ENCODE measurements at regions of chr1 and their contacts with region 1.

Region 1: DNA sequence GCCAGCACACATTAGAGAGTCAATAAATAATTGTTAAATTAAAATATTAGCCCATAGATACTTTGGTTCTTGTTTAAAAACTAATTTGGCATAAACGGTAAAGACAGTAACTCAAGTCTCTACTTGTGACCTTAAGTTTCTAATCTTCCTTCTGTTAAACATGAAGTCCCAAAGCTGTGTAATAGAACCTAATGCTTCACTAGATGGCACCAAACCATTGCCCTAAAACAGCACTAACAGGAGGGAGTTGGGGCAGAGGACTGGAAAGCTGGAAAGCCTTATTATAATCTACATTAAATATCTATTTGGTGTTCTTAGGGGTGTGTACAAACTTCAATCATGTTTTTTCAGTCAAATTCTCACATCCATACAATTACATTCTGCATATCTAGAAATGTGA is 176.7 kb downstream of the OLFM3 start:
- DNase-seq: no peak
- H3K4me3 Mint-ChIP-seq: no peak overlapping the region
- H3K27ac Mint-ChIP-seq: no peak overlapping the region
- H3K4me1 Mint-ChIP-seq: no peaks in the 10 kb centered on the region
- H3K27me3 Mint-ChIP-seq: no peaks in the 10 kb centered on the region
- CTCF ChIP-seq: no peak

Region 2: DNA sequence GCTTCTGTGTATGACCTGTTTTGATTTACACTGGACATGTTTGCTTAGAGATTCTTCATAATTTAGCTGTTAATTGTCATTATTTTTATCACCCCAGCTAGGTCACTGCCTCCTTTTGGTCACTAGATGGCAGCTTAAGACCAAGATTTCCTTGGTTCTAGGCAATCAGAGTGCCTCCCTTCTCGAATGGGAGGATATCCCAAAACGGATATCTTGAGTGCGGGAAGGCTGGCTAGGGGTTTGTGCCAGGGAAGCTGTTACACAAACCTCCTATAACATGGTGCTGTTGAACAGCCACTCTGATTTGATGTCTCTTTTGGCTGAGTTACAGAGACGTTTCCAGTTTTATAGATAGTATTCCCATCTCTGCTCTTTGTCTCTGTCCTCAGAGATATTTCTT is 299.8 kb before region 1 on chr1:
- CTCF ChIA-PET with region 1: no interaction called
- intact Hi-C with region 1: loop called (anchors 10 kb)
- DNase-seq: peak; percentile 2
- H3K4me3 Mint-ChIP-seq: no peak overlapping the region
- H3K27ac Mint-ChIP-seq: no peak overlapping the region
- H3K4me1 Mint-ChIP-seq: no peaks in the 10 kb centered on the region
- H3K27me3 Mint-ChIP-seq: no peaks in the 10 kb centered on the region
- CTCF ChIP-seq: peak; percentile 23

Region 3: DNA sequence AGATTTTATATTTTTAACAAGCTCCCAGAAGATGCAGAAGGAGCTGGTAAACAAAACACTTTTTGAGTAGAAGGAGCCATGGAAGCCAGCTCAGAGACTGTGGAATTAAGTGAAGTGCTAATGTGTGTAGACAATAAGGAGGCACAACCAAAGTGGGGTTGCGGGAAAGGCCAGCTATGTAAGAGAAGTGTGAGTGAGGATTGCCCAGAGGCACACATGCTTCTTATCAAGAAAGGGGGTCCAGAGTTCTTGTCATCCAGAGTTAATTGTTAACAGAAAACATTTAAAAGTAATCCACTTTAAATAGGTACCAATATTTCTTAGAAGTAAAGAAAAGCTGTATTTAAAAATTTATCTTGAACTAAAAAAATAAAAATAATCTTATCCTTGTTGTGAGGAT is 39.9 kb after region 1 on chr1:
- CTCF ChIA-PET with region 1: no interaction called
- intact Hi-C with region 1: no loop called
- DNase-seq: no peak
- H3K4me3 Mint-ChIP-seq: no peak overlapping the region
- H3K27ac Mint-ChIP-seq: no peak overlapping the region
- H3K4me1 Mint-ChIP-seq: no peaks in the 10 kb centered on the region
- H3K27me3 Mint-ChIP-seq: no peaks in the 10 kb centered on the region
- CTCF ChIP-seq: no peak

Region 4: DNA sequence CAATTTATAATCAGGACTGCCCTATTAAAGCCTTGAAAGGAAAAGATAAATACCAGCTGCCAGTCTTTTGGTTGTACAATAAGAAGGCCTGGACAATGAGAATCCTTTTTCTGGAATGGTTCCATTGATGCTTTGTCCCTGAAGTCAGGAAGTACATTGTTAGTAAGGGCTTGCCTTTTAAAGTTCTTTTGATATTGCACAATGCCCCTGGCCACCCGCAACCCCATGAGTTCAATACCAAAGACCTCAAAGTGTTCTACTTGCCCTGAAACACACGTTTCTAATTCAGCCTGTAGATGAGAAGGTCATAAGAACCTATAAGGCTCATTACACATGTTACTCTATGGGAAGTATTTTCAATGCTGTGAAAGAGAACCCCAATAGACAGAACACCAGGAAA is 64.5 kb after region 1 on chr1:
- CTCF ChIA-PET with region 1: no interaction called
- intact Hi-C with region 1: no loop called
- DNase-seq: no peak
- H3K4me3 Mint-ChIP-seq: no peak overlapping the region
- H3K27ac Mint-ChIP-seq: no peak overlapping the region
- H3K4me1 Mint-ChIP-seq: no peaks in the 10 kb centered on the region
- H3K27me3 Mint-ChIP-seq: no peaks in the 10 kb centered on the region
- CTCF ChIP-seq: no peak

Measured in Calu3 (cell line).